ENCODE measurements at regions of chr9 and their contacts with region 1.

Region 1: DNA sequence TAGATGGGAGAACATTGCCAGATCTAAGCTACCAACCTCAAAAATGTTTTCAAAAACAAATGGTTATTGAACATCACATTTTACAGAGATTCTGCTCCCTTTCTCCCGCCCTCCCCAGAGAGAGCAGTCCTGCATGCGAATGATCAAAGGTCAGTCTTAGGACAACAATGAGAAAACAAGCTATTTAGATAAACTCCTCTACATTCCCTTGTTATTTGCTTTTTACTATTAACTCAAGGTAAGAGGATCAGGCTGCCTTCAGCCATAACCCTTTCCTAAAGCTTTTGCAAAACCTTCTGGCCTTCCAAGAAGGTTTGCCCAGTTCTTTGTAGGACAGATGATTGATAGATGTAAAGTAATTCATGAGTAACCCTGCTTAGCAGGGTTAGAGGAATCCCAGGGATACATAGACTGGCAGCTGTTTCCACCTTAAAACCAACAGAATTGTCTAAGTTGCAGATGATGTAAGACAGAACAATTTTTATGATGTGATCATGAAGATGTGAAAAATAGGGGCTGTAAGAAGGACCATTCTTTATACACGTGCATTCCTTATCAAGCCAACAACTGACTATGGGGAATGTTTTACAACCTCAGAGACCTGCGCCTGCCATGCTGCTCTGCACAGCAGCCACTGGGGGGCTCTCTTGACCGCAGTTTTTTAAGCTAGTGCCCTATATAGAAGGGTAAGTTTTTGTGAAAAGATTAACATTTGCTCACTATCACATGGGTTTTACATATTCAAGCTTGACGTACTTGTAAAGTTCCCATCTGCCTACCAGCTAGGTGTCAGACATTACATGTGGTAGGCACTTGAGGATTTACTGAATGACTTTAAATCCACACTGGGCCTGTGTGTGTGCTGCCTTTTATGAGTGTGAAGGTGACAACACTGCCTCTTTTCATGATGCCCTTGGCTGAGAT is 2.3 kb upstream of the ZNF782 start:
- DNase-seq: peak; percentile 75
- ATAC-seq: peak; percentile 59

Region 2: GRCh38 chr9:96449845-96450612 is 406.6 kb before region 1 on chr9 and contains the start of gene HABP4:
- intact Hi-C with region 1: no loop called
- DNase-seq: peak; percentile 99
- ATAC-seq: peak; percentile 100
- total RNA-seq, gene HABP4: 25.8 TPM

Region 3: DNA sequence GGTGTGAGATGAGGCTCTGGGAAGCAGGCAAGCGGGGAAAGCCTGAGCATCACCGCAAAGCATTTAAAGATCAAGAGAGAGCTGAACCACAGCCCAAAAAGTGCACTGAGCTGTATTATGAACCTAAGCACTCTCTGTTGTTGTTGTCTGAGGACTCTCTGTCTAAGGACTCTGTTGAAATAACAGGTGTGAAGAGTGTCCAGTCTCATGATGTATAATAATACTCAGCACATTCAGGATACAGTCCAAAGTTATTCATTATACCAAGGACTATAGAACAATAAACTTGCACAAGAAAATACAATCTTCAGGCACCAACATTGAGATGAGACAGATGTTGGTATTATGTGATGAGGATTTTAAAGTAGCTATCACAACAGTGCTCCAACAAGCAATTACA is 254.1 kb after region 1 on chr9:
- intact Hi-C with region 1: loop called (anchors 1 kb)
- DNase-seq: no peak
- ATAC-seq: no peak

Region 4: DNA sequence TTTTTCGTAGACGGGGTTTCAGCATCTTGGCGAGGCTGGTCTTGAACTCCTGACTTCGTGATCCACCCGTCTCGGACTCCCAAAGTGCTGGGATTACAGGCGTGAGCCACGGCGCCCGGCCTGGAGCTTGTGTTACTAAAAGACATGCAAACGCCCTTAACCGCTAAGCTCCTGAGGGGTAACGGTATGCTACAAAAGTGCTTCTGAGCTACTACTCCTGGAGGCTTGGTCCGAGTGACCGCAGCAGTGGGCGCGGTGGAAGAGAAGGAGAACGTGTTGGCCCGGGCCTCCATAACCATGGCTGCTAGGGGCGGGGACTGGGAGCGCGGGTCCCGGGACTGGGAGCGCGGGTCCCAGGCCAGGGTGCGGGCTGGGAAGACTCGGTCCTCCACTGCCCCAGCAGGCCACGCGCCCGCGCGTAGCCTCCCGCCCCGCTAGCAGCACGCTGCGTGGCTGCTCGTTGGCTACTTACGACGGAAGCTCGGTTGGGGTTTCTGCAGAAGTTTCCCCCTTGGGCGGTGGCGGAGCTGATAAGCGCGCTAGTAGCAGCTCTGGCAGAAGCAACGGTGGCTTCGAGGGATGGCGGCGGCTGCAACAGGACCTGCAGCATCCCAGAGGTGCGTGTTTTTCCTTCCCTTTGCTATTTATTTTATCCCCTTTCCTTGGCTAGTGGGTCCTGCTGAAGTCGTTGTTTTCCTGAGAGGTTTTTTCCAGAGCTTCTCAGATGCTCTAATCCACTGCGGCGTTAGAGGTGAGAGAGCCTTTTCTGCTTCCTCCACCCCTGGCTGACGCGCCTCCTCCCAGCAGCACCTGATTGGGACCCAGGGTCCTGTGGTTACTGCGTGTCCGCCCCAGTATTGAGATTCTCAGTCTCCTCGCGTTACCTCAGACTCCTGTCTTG is 381.6 kb after region 1 on chr9:
- intact Hi-C with region 1: loop called (anchors 5 kb)
- DNase-seq: peak; percentile 88
- ATAC-seq: peak; percentile 99

Region 5: GRCh38 chr9:97398999-97399758 is 542.6 kb after region 1 on chr9:
- intact Hi-C with region 1: loop called (anchors 2 kb)
- DNase-seq: peak; percentile 88
- ATAC-seq: peak; percentile 68

Region 6: GRCh38 chr9:97632985-97633858 is 776.6 kb after region 1 on chr9 and contains the starts of genes NCBP1 and TSTD2:
- intact Hi-C with region 1: loop called (anchors 5 kb)
- DNase-seq: peak; percentile 99
- ATAC-seq: peak; percentile 95
- total RNA-seq, gene NCBP1: 20.0 TPM
- total RNA-seq, gene TSTD2: 24.8 TPM

Measured in Right ventricle myocardium inferior (tissue), 1 donor.